HCT116 (cell line): ENCODE measurements at regions of chr2 and their contacts with region 1.

Region 1: DNA sequence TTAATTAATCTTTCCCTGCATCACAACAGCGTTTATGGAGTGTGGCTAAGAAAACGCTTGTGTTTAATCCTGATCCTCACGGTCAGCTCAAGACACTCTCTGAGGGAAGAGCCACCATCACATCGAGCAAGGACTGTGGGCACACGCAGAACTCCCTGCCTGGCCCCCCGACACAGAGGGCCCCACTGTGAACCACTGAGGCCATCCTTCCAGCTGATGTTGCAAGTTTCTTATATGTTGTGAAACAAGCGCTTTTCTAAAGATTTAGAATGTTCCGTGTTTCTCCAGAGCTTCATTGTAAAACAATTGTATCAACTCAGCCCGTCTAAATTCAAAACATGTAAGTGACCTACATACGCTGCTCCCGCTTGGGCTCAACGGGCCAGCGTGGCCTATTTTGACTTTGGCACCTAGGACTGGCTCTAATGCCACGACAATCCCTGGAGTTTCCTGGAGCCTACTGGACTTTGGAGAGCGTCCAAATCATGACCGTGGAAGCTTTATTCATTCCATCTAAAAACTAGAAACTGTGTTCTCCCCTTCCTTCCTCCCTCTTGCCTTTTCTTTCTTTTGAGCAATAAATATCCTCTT is 34.9 kb downstream of the SERPINE2 start:
- DNase-seq: no peak
- ATAC-seq: no peak
- H3K4me3 ChIP-seq: no peak overlapping the region
- H3K27ac ChIP-seq: no peak overlapping the region
- H3K4me1 ChIP-seq: peaks cover 4% of the 10 kb centered on the region in 2 experiments; a peak in 2 of 4 replicates
- H3K27me3 ChIP-seq: no peaks in the 10 kb centered on the region
- CTCF ChIP-seq: no peak
- POLR2A ChIP-seq: no peak
- RAD21 ChIP-seq: no peak

Region 2: DNA sequence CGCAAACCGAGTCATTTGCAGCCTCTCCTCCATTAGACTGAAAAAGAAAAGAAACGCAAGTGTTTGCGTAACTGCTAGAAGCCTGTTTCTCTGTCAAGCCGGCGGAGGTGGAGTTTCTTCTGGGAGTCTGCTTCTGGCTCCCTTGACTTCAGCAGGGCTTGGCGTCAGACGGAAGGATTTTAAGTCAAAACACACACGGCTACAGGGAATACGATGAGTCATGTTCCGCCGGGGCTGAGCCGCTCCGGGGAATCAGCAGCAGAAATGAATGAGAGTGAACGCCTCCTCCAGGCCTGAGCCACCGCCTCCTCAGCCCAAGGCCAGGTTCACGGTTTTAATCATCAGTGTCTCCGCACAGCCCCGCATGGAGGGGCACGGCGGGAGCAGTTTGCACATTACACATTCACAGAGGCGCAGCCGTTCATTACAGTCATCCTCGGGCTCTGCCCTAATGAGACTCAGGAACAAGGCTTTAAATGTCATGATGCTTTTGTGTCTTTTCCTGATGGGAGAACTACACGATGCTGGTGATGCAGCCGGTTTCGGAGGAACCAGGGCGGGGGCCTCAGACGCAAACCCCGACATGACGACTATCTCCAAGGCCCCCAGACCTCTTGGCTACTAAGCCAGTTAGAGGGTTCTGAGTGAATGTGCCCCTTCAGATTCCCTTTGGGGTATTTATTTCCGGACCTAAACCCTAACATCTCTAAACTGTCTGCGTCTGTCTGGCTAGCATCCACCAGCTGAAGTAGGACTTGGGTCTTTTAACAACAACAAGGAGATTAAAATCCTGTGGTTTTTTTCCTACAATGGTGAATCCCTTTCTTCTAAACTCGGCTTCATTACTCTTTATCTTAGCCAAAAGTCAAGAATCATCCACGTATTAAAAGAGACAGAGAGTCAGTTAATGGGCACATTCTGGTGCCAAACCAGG is 390.9 kb before region 1 on chr2:
- CTCF ChIA-PET with region 1: no interaction called
- POLR2A ChIA-PET with region 1: no interaction called
- RAD21 ChIA-PET with region 1: no interaction called
- intact Hi-C with region 1: no loop called
- DNase-seq: peak; percentile 89
- ATAC-seq: peak; percentile 97
- H3K4me3 ChIP-seq: peak overlapping the region; percentile 24 to 53
- H3K27ac ChIP-seq: peak overlapping the region; percentile 83
- H3K4me1 ChIP-seq: peaks cover 30 to 46% of the 10 kb centered on the region in 2 experiments
- H3K27me3 ChIP-seq: no peaks in the 10 kb centered on the region
- CTCF ChIP-seq: no peak
- POLR2A ChIP-seq: no peak
- RAD21 ChIP-seq: peak; percentile 49

Region 3: DNA sequence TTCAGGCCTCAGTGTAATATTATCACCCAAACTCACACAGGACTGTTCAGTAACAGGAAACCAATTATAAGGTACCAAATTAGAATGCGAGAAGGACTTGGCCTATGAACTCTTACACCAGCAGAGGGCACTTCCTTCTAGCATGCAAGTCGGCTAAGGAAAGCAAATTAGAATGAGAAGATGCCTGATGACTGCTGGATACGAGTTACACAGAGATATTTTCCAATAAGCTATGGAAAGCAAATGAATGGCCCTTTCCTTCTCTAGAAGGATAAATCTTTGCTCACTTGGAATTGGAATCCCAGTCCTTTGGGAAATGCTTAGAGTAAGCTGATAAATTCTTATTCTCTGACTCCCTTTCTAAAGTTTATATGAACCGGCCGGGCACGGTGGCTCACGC is 276.6 kb before region 1 on chr2:
- CTCF ChIA-PET with region 1: no interaction called
- POLR2A ChIA-PET with region 1: no interaction called
- RAD21 ChIA-PET with region 1: no interaction called
- intact Hi-C with region 1: no loop called
- DNase-seq: peak; percentile 79
- ATAC-seq: peak; percentile 73
- H3K4me3 ChIP-seq: no peak overlapping the region
- H3K27ac ChIP-seq: peak overlapping the region; percentile 93
- H3K4me1 ChIP-seq: peaks cover 43 to 64% of the 10 kb centered on the region in 2 experiments
- H3K27me3 ChIP-seq: no peaks in the 10 kb centered on the region
- CTCF ChIP-seq: peak; percentile 63 to 76 (median 70); a peak in 5 of 6 replicates
- POLR2A ChIP-seq: no peak
- RAD21 ChIP-seq: peak; percentile 86

Region 4: GRCh38 chr2:223993621-223994232 is 10.5 kb before region 1 on chr2:
- CTCF ChIA-PET with region 1: interaction called, 23 read pairs
- POLR2A ChIA-PET with region 1: no interaction called
- RAD21 ChIA-PET with region 1: no interaction called
- intact Hi-C with region 1: no loop called
- DNase-seq: peak; percentile 78
- ATAC-seq: peak; percentile 85
- H3K4me3 ChIP-seq: no peak overlapping the region
- H3K27ac ChIP-seq: no peak overlapping the region
- H3K4me1 ChIP-seq: peaks cover 0 to 9% of the 10 kb centered on the region in 2 experiments; a peak in 2 of 4 replicates
- H3K27me3 ChIP-seq: no peaks in the 10 kb centered on the region
- CTCF ChIP-seq: peak; percentile 76 to 89 (median 87)
- POLR2A ChIP-seq: no peak
- RAD21 ChIP-seq: peak; percentile 92